ENCODE measurements at regions of chr2 and their contacts with region 1.

Region 1: DNA sequence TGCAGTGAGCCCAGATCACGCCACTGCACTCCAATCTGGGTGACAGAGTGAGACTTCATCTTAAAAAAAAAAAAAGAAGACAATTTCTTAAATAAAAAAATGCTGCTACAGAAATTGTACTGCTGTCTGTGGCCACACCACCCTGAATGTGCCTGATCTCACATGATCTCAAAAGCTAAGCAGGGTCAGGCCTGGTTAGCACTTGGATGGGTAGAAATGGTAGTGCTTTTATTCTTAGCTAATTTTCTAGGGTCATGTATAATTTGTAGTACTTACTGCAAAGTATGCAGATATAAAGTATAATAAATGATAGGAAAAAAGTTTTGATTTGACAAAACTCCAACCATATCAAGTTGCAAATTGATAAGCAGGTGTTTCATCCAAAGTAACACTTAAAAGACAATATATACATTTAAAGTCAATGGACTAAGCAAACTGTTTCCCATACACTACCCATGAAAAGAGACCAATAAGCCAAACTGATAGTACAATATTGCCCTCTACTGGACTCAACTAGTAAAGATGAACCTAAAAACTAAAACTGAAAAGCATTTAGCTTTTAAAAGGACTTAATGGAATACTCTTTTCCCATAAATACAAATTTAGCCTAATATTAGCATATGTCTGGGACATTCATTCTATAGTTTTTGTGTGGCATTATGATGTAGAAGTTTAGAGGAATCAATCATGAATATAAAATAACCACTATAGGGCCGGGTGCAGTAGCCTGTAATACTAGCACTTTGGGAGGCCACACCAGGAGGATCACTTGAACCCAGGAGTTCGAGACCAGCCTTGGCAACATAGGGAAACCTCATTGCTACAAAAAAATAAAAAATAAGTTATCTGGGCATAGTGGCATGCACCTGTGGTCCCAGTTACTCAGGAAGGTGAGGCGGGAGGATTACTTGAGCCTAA is 18.6 kb upstream of the PEX13 start:
- DNase-seq: no peak
- ATAC-seq: peak; percentile 92
- H3K4me3 ChIP-seq: no peak overlapping the region
- H3K27ac ChIP-seq: no peak overlapping the region
- H3K4me1 ChIP-seq: no peaks in the 10 kb centered on the region; the same call in 1 of the 2 replicates
- H3K27me3 ChIP-seq: no peaks in the 10 kb centered on the region
- CTCF ChIP-seq: peak; percentile 48 to 66 (median 59); a peak in 5 of 6 replicates
- EP300 ChIP-seq: no peak
- POLR2A ChIP-seq: no peak
- RAD21 ChIP-seq: peak; percentile 89

Region 2: GRCh38 chr2:60699617-60700016 is 299.3 kb before region 1 on chr2:
- CTCF ChIA-PET with region 1: interaction called, 39 read pairs
- POLR2A ChIA-PET with region 1: no interaction called
- RAD21 ChIA-PET with region 1: interaction called, 83 read pairs
- SMC1A ChIA-PET with region 1: interaction called, 96 read pairs
- in situ Hi-C with region 1: no loop called
- intact Hi-C with region 1: no loop called
- DNase-seq: no peak
- ATAC-seq: no peak
- H3K4me3 ChIP-seq: no peak overlapping the region
- H3K27ac ChIP-seq: no peak overlapping the region
- H3K4me1 ChIP-seq: no peaks in the 10 kb centered on the region
- H3K27me3 ChIP-seq: no peaks in the 10 kb centered on the region
- CTCF ChIP-seq: no peak
- EP300 ChIP-seq: no peak
- POLR2A ChIP-seq: no peak
- RAD21 ChIP-seq: no peak

Region 3: GRCh38 chr2:60794277-60794863 is 204.5 kb before region 1 on chr2:
- CTCF ChIA-PET with region 1: interaction called, 178 read pairs
- POLR2A ChIA-PET with region 1: no interaction called
- RAD21 ChIA-PET with region 1: interaction called, 53 read pairs
- SMC1A ChIA-PET with region 1: interaction called, 48 read pairs
- in situ Hi-C with region 1: loop called (anchors 5 kb)
- intact Hi-C with region 1: loop called (anchors 1 kb)
- DNase-seq: no peak
- ATAC-seq: peak; percentile 51; the same call in 2 of the 3 replicates
- H3K4me3 ChIP-seq: no peak overlapping the region
- H3K27ac ChIP-seq: no peak overlapping the region
- H3K4me1 ChIP-seq: peaks cover 16% of the 10 kb centered on the region
- H3K27me3 ChIP-seq: no peaks in the 10 kb centered on the region
- CTCF ChIP-seq: peak; percentile 33 to 73 (median 55); a peak in 4 of 6 replicates
- EP300 ChIP-seq: no peak
- POLR2A ChIP-seq: no peak
- RAD21 ChIP-seq: peak; percentile 81

Region 4: GRCh38 chr2:60834270-60834962 is 164.5 kb before region 1 on chr2:
- CTCF ChIA-PET with region 1: interaction called, 16 read pairs
- POLR2A ChIA-PET with region 1: interaction called, 5 read pairs
- RAD21 ChIA-PET with region 1: interaction called, 4 read pairs
- SMC1A ChIA-PET with region 1: interaction called, 6 read pairs
- in situ Hi-C with region 1: no loop called
- intact Hi-C with region 1: no loop called
- DNase-seq: peak; percentile 63
- ATAC-seq: peak; percentile 74
- H3K4me3 ChIP-seq: no peak overlapping the region
- H3K27ac ChIP-seq: peak overlapping the region; percentile 63
- H3K4me1 ChIP-seq: peaks cover 68% of the 10 kb centered on the region
- H3K27me3 ChIP-seq: no peaks in the 10 kb centered on the region
- CTCF ChIP-seq: no peak
- EP300 ChIP-seq: peak; percentile 47 to 79; a peak in 2 of 4 replicates
- POLR2A ChIP-seq: no peak
- RAD21 ChIP-seq: peak; percentile 16; the same call in 1 of the 2 replicates

Region 5: GRCh38 chr2:60891180-60891579 is 107.7 kb before region 1 on chr2:
- CTCF ChIA-PET with region 1: interaction called, 7 read pairs
- POLR2A ChIA-PET with region 1: no interaction called
- RAD21 ChIA-PET with region 1: interaction called, 10 read pairs
- SMC1A ChIA-PET with region 1: interaction called, 6 read pairs
- in situ Hi-C with region 1: no loop called
- intact Hi-C with region 1: no loop called
- DNase-seq: no peak
- ATAC-seq: peak; percentile 54
- H3K4me3 ChIP-seq: no peak overlapping the region
- H3K27ac ChIP-seq: no peak overlapping the region
- H3K4me1 ChIP-seq: peaks cover 9% of the 10 kb centered on the region
- H3K27me3 ChIP-seq: no peaks in the 10 kb centered on the region
- CTCF ChIP-seq: no peak
- EP300 ChIP-seq: no peak
- POLR2A ChIP-seq: no peak
- RAD21 ChIP-seq: no peak

Region 6: GRCh38 chr2:60954139-60954538 is 44.7 kb before region 1 on chr2:
- CTCF ChIA-PET with region 1: interaction called, 6 read pairs
- POLR2A ChIA-PET with region 1: no interaction called
- RAD21 ChIA-PET with region 1: interaction called, 8 read pairs
- SMC1A ChIA-PET with region 1: interaction called, 34 read pairs
- in situ Hi-C with region 1: no loop called
- intact Hi-C with region 1: no loop called
- DNase-seq: peak; percentile 40
- ATAC-seq: peak; percentile 94
- H3K4me3 ChIP-seq: no peak overlapping the region
- H3K27ac ChIP-seq: no peak overlapping the region
- H3K4me1 ChIP-seq: no peaks in the 10 kb centered on the region
- H3K27me3 ChIP-seq: no peaks in the 10 kb centered on the region
- CTCF ChIP-seq: no peak
- EP300 ChIP-seq: peak; percentile 45 to 79; a peak in 3 of 4 replicates
- POLR2A ChIP-seq: no peak
- RAD21 ChIP-seq: no peak

Region 7: GRCh38 chr2:60984720-60985119 is 14.2 kb before region 1 on chr2:
- CTCF ChIA-PET with region 1: interaction called, 10 read pairs
- POLR2A ChIA-PET with region 1: no interaction called
- RAD21 ChIA-PET with region 1: interaction called, 6 read pairs
- SMC1A ChIA-PET with region 1: interaction called, 7 read pairs
- in situ Hi-C with region 1: no loop called
- intact Hi-C with region 1: no loop called
- DNase-seq: no peak
- ATAC-seq: peak; percentile 76
- H3K4me3 ChIP-seq: no peak overlapping the region
- H3K27ac ChIP-seq: peak overlapping the region; percentile 12
- H3K4me1 ChIP-seq: peaks cover 26% of the 10 kb centered on the region
- H3K27me3 ChIP-seq: no peaks in the 10 kb centered on the region
- CTCF ChIP-seq: no peak
- EP300 ChIP-seq: no peak
- POLR2A ChIP-seq: no peak
- RAD21 ChIP-seq: no peak

Measured in GM12878 (cell line).